A549 (cell line): ENCODE measurements at regions of chr5 and their contacts with region 1.

Region 1: GRCh38 chr5:10283927-10284635 is 23.6 kb downstream of the CMBL start:
- DNase-seq: peak; percentile 82 to 85
- ATAC-seq: peak; percentile 99
- H3K4me3 ChIP-seq: no peak overlapping the region
- H3K27ac ChIP-seq: no peak overlapping the region
- H3K4me1 ChIP-seq: peaks cover 5% of the 10 kb centered on the region; the same call in 1 of the 3 replicates
- CTCF ChIP-seq: peak; percentile 87
- EP300 ChIP-seq: no peak
- POLR2A ChIP-seq: no peak
- RAD21 ChIP-seq: peak; percentile 87 to 89

Region 2: DNA sequence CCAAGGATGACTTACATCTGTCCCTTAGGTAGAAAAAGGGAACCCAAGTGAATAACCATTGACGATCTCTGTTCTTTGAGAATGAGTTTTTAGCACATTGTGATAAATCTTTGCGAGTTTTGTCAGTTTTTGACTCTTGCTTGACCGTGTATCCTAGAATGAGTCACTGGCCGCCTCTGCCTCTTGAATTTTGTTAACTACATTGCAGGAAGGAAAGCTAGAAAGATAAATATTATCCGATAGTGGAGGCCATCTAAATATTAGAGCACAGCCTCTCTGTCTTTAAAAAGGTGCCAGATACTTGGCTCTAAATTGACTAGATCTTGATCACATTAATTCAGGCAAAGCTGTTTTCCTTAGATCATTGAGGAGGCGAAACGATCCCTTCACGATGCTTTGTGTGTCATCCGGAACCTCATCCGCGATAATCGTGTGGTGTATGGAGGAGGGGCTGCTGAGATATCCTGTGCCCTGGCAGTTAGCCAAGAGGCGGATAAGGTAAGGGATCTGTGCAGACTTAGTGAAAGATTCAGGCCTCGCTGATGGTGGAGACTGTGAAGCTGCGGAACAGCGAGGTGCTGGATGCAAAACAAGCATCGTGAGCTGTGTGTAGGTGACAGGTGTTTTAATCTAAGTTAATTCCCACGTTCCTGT is 21.8 kb before region 1 on chr5:
- CTCF ChIA-PET with region 1: interaction called, 13 read pairs
- POLR2A ChIA-PET with region 1: no interaction called
- DNase-seq: no peak
- ATAC-seq: no peak
- H3K4me3 ChIP-seq: no peak overlapping the region
- H3K27ac ChIP-seq: no peak overlapping the region
- H3K4me1 ChIP-seq: peaks cover 4% of the 10 kb centered on the region
- CTCF ChIP-seq: no peak
- EP300 ChIP-seq: no peak
- POLR2A ChIP-seq: no peak
- RAD21 ChIP-seq: no peak

Region 3: DNA sequence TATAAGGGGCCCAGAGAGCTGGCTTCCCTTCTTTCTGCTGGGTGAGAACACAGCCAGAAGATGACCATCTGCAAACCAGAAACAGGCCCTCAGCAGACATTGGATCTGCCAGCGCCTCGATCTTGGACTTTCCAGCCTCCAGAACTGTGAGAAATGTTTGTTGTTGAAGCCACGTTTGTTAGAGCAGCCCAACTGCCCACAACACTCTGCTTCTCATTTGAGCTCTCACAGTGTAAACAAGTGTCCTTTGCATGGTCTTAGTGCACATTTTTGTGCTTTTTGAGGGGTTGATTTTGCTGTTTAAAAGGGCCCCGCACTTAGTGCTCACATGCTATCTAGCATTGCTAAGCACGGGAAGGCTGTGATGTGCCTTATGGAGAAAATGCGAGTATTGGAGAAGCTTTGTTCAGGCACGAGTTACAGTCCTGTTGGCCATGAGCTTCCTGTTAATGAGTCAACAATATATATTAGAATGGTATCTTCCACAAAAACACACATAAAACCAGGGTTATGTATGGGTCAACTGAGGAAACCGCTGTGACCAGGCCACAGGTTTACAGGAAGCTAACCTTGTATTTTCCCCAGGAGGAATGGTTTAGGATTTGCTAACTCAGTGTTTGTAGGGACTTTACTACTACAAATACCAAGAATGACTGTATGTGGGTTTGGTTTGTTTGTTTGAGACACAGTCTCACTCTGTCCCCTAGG is 11.7 kb after region 1 on chr5:
- CTCF ChIA-PET with region 1: interaction called, 12 read pairs
- POLR2A ChIA-PET with region 1: no interaction called
- DNase-seq: no peak
- ATAC-seq: no peak
- H3K4me3 ChIP-seq: no peak overlapping the region
- H3K27ac ChIP-seq: no peak overlapping the region
- H3K4me1 ChIP-seq: no peaks in the 10 kb centered on the region
- CTCF ChIP-seq: no peak
- EP300 ChIP-seq: no peak
- POLR2A ChIP-seq: no peak
- RAD21 ChIP-seq: no peak

Region 4: GRCh38 chr5:10331341-10331796 is 47.3 kb after region 1 on chr5:
- CTCF ChIA-PET with region 1: interaction called, 13 read pairs
- POLR2A ChIA-PET with region 1: no interaction called
- DNase-seq: peak in 1 of 2 experiments; percentile 56
- ATAC-seq: peak in 1 of 2 experiments; percentile 17; a peak in 1 of 6 replicates
- H3K4me3 ChIP-seq: no peak overlapping the region
- H3K27ac ChIP-seq: no peak overlapping the region
- H3K4me1 ChIP-seq: peaks cover 22% of the 10 kb centered on the region; the same call in 2 of the 3 replicates
- CTCF ChIP-seq: no peak
- EP300 ChIP-seq: no peak
- POLR2A ChIP-seq: no peak
- RAD21 ChIP-seq: no peak

Region 5: DNA sequence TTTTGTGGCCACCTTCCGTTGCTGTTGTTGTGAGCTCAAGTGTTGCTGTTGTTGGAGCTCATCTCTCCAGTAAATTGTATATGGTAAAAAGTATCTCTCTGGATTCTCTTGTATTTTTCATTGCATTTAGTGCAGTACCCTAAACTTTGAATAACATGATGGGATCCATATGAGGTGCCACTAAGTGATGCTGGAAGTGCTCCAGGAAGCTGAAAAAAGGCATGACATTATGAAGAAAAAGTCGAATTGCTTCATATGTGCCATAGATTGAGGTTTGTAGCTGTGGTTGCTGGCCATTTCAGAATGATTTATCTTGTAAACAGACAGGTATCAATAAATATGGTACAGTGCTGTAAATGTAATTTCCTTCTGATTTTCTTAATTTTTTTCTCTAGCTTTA is 74.9 kb after region 1 on chr5:
- CTCF ChIA-PET with region 1: interaction called, 22 read pairs
- POLR2A ChIA-PET with region 1: no interaction called
- DNase-seq: no peak
- ATAC-seq: no peak
- H3K4me3 ChIP-seq: no peak overlapping the region
- H3K27ac ChIP-seq: no peak overlapping the region
- H3K4me1 ChIP-seq: peaks cover 25% of the 10 kb centered on the region
- CTCF ChIP-seq: no peak
- EP300 ChIP-seq: no peak
- POLR2A ChIP-seq: no peak
- RAD21 ChIP-seq: no peak

Region 6: GRCh38 chr5:10418654-10419345 is 134.7 kb after region 1 on chr5:
- CTCF ChIA-PET with region 1: interaction called, 65 read pairs
- POLR2A ChIA-PET with region 1: no interaction called
- DNase-seq: no peak
- ATAC-seq: no peak
- H3K4me3 ChIP-seq: no peak overlapping the region
- H3K27ac ChIP-seq: no peak overlapping the region
- H3K4me1 ChIP-seq: peaks cover 21% of the 10 kb centered on the region
- CTCF ChIP-seq: no peak
- EP300 ChIP-seq: no peak
- POLR2A ChIP-seq: no peak
- RAD21 ChIP-seq: no peak